ENCODE measurements at regions of chr12 and their contacts with region 1.

Region 1: GRCh38 chr12:75334384-75335030 is at the start of gene GLIPR1L1:
- H3K4me3 Mint-ChIP-seq: peak within 1 kb of the TSS; percentile 58
- H3K27ac Mint-ChIP-seq: no peak within 1 kb of the TSS
- H3K4me1 Mint-ChIP-seq: peaks cover 13% of the 10 kb centered on the region
- H3K27me3 Mint-ChIP-seq: peaks cover 5% of the 10 kb centered on the region

Region 2: GRCh38 chr12:75505706-75506312 is 171.3 kb after region 1 on chr12:
- intact Hi-C with region 1: loop called (anchors 2 kb)
- H3K4me3 Mint-ChIP-seq: no peak overlapping the region
- H3K27ac Mint-ChIP-seq: no peak overlapping the region
- H3K4me1 Mint-ChIP-seq: peaks cover 10% of the 10 kb centered on the region
- H3K27me3 Mint-ChIP-seq: no peaks in the 10 kb centered on the region